Heart right ventricle (tissue), 16 donors: ENCODE measurements at regions of chr9 and their contacts with region 1.

Region 1: GRCh38 chr9:92133949-92134604 is 18.9 kb upstream of the SPTLC1 start:
- DNase-seq: peak; percentile 72 to 81
- ATAC-seq: peak; percentile 48 to 86 (median 76)
- H3K4me3 ChIP-seq: peak overlapping the region in 3 of 10 donors; percentile 14 to 34 (median 16)
- H3K27ac ChIP-seq: no peak overlapping the region
- H3K4me1 ChIP-seq: peaks cover 0 to 9% (median 7%) of the 10 kb centered on the region in 9 donors
- H3K27me3 ChIP-seq: peaks cover 0 to 22% (median 0%) of the 10 kb centered on the region in 7 donors
- CTCF ChIP-seq: peak; percentile 81 to 99 (median 95)

Region 2: GRCh38 chr9:92191801-92192200 is 57.7 kb after region 1 on chr9:
- intact Hi-C with region 1: no loop called
- DNase-seq: no peak
- ATAC-seq: no peak
- H3K4me3 ChIP-seq: no peak overlapping the region
- H3K27ac ChIP-seq: no peak overlapping the region
- H3K4me1 ChIP-seq: no peaks in the 10 kb centered on the region
- H3K27me3 ChIP-seq: peaks cover 0 to 23% (median 5%) of the 10 kb centered on the region in 7 donors
- CTCF ChIP-seq: no peak

Region 3: GRCh38 chr9:92293452-92294296 is 159.6 kb after region 1 on chr9 and contains the start of gene IARS1:
- intact Hi-C with region 1: loop called in 2 of 10 experiments (anchors 10 kb)
- DNase-seq: peak; percentile 98 to 99
- ATAC-seq: peak; percentile 99 to 100 (median 100)
- H3K4me3 ChIP-seq: peak within 1 kb of the TSS; percentile 60 to 92 (median 78)
- H3K27ac ChIP-seq: peak within 1 kb of the TSS; percentile 46 to 87 (median 74)
- H3K4me1 ChIP-seq: peaks cover 0 to 32% (median 27%) of the 10 kb centered on the region in 9 donors
- H3K27me3 ChIP-seq: no peaks in the 10 kb centered on the region
- CTCF ChIP-seq: peak in 6 of 9 donors; percentile 13 to 65 (median 47)
- total RNA-seq, gene IARS1: 48.0 to 79.6 (median 62.7) TPM